Activated CD4-positive, alpha-beta T cell treated with anti-CD3 and anti-CD28 coated beads for 36 hours (primary cell): ENCODE measurements at regions of chr6 and their contacts with region 1.

Region 1: GRCh38 chr6:106360410-106360988 is at the start of gene CRYBG1:
- DNase-seq: peak; percentile 84
- ATAC-seq: peak; percentile 94
- H3K4me3 Mint-ChIP-seq: peak within 1 kb of the TSS; percentile 69
- H3K27ac Mint-ChIP-seq: peak within 1 kb of the TSS; percentile 19
- H3K4me1 Mint-ChIP-seq: peaks cover 11% of the 10 kb centered on the region
- H3K27me3 Mint-ChIP-seq: peaks cover 44% of the 10 kb centered on the region
- total RNA-seq, gene CRYBG1: 26.2 to 26.6 TPM

Region 2: GRCh38 chr6:105051896-105052471 is 1308.5 kb before region 1 on chr6:
- CTCF ChIA-PET with region 1: no interaction called
- POLR2A ChIA-PET with region 1: no interaction called
- intact Hi-C with region 1: no loop called
- DNase-seq: no peak
- ATAC-seq: no peak
- H3K4me3 Mint-ChIP-seq: no peak overlapping the region
- H3K27ac Mint-ChIP-seq: no peak overlapping the region
- H3K4me1 Mint-ChIP-seq: no peaks in the 10 kb centered on the region
- H3K27me3 Mint-ChIP-seq: peaks cover 17% of the 10 kb centered on the region

Region 3: GRCh38 chr6:106347341-106347740 is 13.2 kb before region 1 on chr6:
- CTCF ChIA-PET with region 1: interaction called, 12 read pairs
- POLR2A ChIA-PET with region 1: no interaction called
- intact Hi-C with region 1: no loop called
- DNase-seq: no peak
- ATAC-seq: no peak
- H3K4me3 Mint-ChIP-seq: no peak overlapping the region
- H3K27ac Mint-ChIP-seq: no peak overlapping the region
- H3K4me1 Mint-ChIP-seq: no peaks in the 10 kb centered on the region
- H3K27me3 Mint-ChIP-seq: peaks cover 22% of the 10 kb centered on the region

Region 4: GRCh38 chr6:106372838-106373501 is 12.5 kb after region 1 on chr6:
- CTCF ChIA-PET with region 1: interaction called, 38 read pairs
- POLR2A ChIA-PET with region 1: no interaction called
- intact Hi-C with region 1: no loop called
- DNase-seq: no peak
- ATAC-seq: peak; percentile 89
- H3K4me3 Mint-ChIP-seq: no peak overlapping the region
- H3K27ac Mint-ChIP-seq: peak overlapping the region; percentile 78
- H3K4me1 Mint-ChIP-seq: peaks cover 12% of the 10 kb centered on the region
- H3K27me3 Mint-ChIP-seq: peaks cover 8% of the 10 kb centered on the region

Region 5: DNA sequence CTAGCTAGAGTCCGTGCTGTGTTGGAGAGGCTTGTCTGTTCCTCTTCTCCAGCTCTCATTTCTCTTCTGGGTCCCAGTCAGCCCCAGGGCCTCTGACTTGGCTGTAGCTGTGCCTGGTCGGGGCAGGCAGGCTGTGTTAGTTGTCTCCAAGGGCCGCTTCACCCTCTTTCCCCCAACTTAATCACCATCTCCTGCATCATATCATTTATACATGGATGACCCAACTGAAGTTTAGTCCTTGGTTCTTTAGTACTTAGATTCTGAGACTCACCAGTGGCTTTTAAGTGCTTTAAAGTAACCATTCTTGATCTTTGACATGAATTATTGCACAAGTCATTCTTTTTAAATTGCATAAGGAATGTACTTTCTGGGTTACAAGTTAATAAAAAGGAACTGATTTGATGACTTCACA is 141.5 kb after region 1 on chr6:
- CTCF ChIA-PET with region 1: no interaction called
- POLR2A ChIA-PET with region 1: no interaction called
- intact Hi-C with region 1: no loop called
- DNase-seq: no peak
- ATAC-seq: no peak
- H3K4me3 Mint-ChIP-seq: no peak overlapping the region
- H3K27ac Mint-ChIP-seq: no peak overlapping the region
- H3K4me1 Mint-ChIP-seq: no peaks in the 10 kb centered on the region
- H3K27me3 Mint-ChIP-seq: no peaks in the 10 kb centered on the region